ENCODE measurements at regions of chr6 and their contacts with region 1.

Region 1: GRCh38 chr6:7238900-7239589 is 74.0 kb downstream of the SSR1 start:
- DNase-seq: peak; percentile 82 to 95
- ATAC-seq: peak; percentile 63 to 82
- H3K4me3 ChIP-seq: no peak overlapping the region
- H3K27ac ChIP-seq: peak overlapping the region; percentile 63 to 75 (median 66)
- H3K4me1 ChIP-seq: peaks cover 32 to 37% of the 10 kb centered on the region in 2 donors
- H3K27me3 ChIP-seq: no peaks in the 10 kb centered on the region
- CTCF ChIP-seq: peak; percentile 73 to 80 (median 77)
- POLR2A ChIP-seq: no peak

Region 2: GRCh38 chr6:6724539-6725467 is 514.2 kb before region 1 on chr6:
- in situ Hi-C with region 1: loop called in 3 of 4 experiments (anchors 5 to 10 kb)
- intact Hi-C with region 1: loop called (anchors 1 kb)
- DNase-seq: peak; percentile 48 to 69
- ATAC-seq: peak; percentile 93 to 94
- H3K4me3 ChIP-seq: peak overlapping the region; percentile 51 to 65 (median 60)
- H3K27ac ChIP-seq: peak overlapping the region; percentile 84 to 90 (median 86)
- H3K4me1 ChIP-seq: peaks cover 18 to 19% of the 10 kb centered on the region in 2 donors
- H3K27me3 ChIP-seq: no peaks in the 10 kb centered on the region
- CTCF ChIP-seq: peak; percentile 66 to 81 (median 74)
- POLR2A ChIP-seq: no peak

Region 3: GRCh38 chr6:6942831-6943230 is 296.2 kb before region 1 on chr6:
- in situ Hi-C with region 1: loop called in 2 of 4 experiments (anchors 25 kb)
- intact Hi-C with region 1: no loop called
- DNase-seq: peak; percentile 85 to 93
- ATAC-seq: peak; percentile 98 to 99
- H3K4me3 ChIP-seq: peak overlapping the region in 3 of 4 donors; percentile 0 to 24 (median 7)
- H3K27ac ChIP-seq: peak overlapping the region; percentile 81 to 91 (median 83)
- H3K4me1 ChIP-seq: peaks cover 13 to 18% of the 10 kb centered on the region in 2 donors
- H3K27me3 ChIP-seq: no peaks in the 10 kb centered on the region
- CTCF ChIP-seq: no peak
- POLR2A ChIP-seq: no peak

Region 4: DNA sequence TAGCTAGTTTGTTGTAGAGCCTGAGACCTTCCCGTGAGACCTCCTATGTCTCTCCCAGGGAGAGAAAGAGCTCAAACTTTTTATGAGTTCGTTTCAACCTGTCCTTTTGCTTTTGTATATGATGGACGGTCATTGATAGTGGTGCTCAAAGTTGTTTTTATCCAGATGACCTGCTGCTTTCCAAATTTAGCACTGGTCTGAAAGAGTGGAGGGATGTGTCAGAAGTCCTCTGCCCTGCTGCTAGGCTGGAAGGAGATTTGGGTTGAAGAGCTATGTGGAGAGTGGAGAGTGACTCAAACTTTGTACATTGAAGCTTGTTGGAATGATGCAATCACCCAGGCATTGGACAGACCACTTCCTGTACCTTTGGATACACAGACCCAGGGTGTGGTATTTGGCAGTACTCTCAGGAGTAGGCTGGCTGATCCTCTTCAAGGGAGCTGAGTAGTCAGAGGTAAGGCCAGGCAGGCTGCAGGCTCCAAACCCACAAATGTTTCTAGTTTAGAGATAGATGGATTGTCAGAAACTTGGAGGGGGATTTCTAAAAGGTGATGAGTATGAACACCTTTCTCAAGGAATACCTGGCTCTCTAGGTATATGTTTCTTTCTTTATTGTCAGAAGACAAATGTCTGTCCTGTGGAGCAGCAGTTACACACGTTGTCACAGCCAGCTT is 180.7 kb before region 1 on chr6:
- in situ Hi-C with region 1: no loop called
- intact Hi-C with region 1: loop called (anchors 5 kb)
- DNase-seq: peak; percentile 89 to 92
- ATAC-seq: peak; percentile 98
- H3K4me3 ChIP-seq: peak overlapping the region in 3 of 4 donors; percentile 19 to 28 (median 23)
- H3K27ac ChIP-seq: peak overlapping the region; percentile 91 to 97 (median 94)
- H3K4me1 ChIP-seq: peaks cover 12 to 16% of the 10 kb centered on the region in 2 donors
- H3K27me3 ChIP-seq: no peaks in the 10 kb centered on the region
- CTCF ChIP-seq: no peak
- POLR2A ChIP-seq: peak; percentile 63 to 67

Region 5: GRCh38 chr6:7140631-7141378 is 98.2 kb before region 1 on chr6:
- in situ Hi-C with region 1: no loop called
- intact Hi-C with region 1: loop called (anchors 5 kb)
- DNase-seq: peak; percentile 92 to 93
- ATAC-seq: peak; percentile 70 to 84
- H3K4me3 ChIP-seq: peak overlapping the region; percentile 64 to 80 (median 72)
- H3K27ac ChIP-seq: peak overlapping the region; percentile 96 to 97 (median 96)
- H3K4me1 ChIP-seq: peaks cover 64 to 69% of the 10 kb centered on the region in 2 donors
- H3K27me3 ChIP-seq: no peaks in the 10 kb centered on the region
- CTCF ChIP-seq: peak in 1 of 5 experiments; percentile 11
- POLR2A ChIP-seq: peak; percentile 94 to 98

Region 6: DNA sequence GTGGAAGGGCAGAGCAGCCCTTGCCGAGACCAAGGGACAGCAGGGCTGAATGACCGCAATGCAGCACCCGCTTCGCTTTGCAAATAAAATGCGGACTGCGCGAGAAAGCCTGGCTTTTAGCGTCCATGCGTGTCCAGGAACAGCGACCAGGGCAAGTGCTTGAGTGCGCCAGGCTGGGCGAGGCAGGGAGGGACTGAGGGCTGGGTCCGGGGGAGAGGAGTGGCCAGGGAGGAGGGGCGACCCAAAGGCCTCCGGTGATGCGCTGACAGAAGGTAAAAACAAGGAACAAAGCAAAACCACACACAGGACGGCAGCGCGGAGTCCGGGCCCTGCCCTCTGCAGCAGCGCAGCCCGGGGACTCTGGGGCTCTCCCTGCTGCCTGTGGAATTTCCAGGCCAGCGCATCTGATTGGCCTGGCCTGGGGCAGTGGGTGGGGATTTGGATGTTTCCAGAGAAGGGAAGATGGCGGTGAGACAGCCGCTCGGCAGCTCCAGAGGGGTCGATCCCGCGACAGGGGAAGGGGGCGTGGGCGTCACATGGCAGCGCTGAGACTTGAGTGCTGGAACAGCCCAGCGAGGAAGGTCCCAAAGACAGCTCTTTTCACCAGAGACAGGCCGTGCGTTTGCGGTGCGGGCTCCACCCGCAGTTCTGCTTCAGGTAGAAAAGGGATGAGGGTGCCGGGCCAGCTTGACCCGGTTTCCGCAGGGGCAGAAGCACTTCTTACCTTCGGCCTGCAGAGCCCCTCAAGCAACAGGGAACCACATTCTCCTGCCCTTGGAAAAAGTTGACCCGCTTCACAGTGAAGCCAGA is 22.2 kb after region 1 on chr6:
- in situ Hi-C with region 1: no loop called
- intact Hi-C with region 1: no loop called
- DNase-seq: peak; percentile 69 to 79
- ATAC-seq: peak; percentile 92 to 94
- H3K4me3 ChIP-seq: peak overlapping the region; percentile 63 to 88 (median 74)
- H3K27ac ChIP-seq: peak overlapping the region; percentile 63 to 71 (median 68)
- H3K4me1 ChIP-seq: peaks cover 7 to 14% of the 10 kb centered on the region in 2 donors
- H3K27me3 ChIP-seq: no peaks in the 10 kb centered on the region
- CTCF ChIP-seq: no peak
- POLR2A ChIP-seq: peak; percentile 42 to 56

Region 7: GRCh38 chr6:7468382-7469081 is 229.5 kb after region 1 on chr6:
- in situ Hi-C with region 1: no loop called
- intact Hi-C with region 1: no loop called
- DNase-seq: no peak
- ATAC-seq: no peak
- H3K4me3 ChIP-seq: no peak overlapping the region
- H3K27ac ChIP-seq: no peak overlapping the region
- H3K4me1 ChIP-seq: no peaks in the 10 kb centered on the region
- H3K27me3 ChIP-seq: no peaks in the 10 kb centered on the region
- CTCF ChIP-seq: no peak
- POLR2A ChIP-seq: no peak